GM10248 (cell line): ENCODE measurements at regions of chr3 and their contacts with region 1.

Region 1: GRCh38 chr3:137946345-137946973 is 63.5 kb upstream of the CLDN18 start:
- DNase-seq: peak; percentile 53
- CTCF ChIP-seq: peak; percentile 62

Region 2: GRCh38 chr3:137105277-137105977 is 841.0 kb before region 1 on chr3:
- CTCF ChIA-PET with region 1: interaction called, 34 read pairs
- POLR2A ChIA-PET with region 1: no interaction called
- DNase-seq: peak; percentile 47
- CTCF ChIP-seq: peak; percentile 71

Region 3: GRCh38 chr3:137110484-137110883 is 836.0 kb before region 1 on chr3:
- CTCF ChIA-PET with region 1: interaction called, 34 read pairs
- POLR2A ChIA-PET with region 1: no interaction called
- DNase-seq: peak; percentile 46
- CTCF ChIP-seq: peak; percentile 49

Region 4: GRCh38 chr3:137962251-137962650 is 15.8 kb after region 1 on chr3:
- CTCF ChIA-PET with region 1: interaction called, 13 read pairs
- POLR2A ChIA-PET with region 1: no interaction called
- DNase-seq: no peak
- CTCF ChIP-seq: no peak

Region 5: DNA sequence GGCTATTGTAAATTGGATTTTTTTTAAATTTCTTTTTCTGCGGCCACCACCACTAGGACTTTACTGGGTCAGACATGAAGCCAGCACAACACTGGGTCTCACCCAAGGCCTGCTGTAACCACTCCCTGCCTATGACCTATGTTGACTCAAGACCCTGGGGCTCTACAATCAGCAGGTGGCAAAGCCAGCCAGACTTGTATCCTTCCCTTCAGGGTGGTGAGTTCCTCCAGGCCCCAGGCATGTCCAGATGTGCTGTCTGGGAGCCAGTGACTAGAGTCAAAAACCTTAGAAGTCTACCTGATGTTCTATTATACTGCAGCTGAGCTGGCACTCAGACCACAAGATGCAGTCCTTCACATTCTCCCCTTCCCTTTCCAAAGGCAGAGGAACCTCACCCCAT is 31.9 kb after region 1 on chr3:
- CTCF ChIA-PET with region 1: no interaction called
- POLR2A ChIA-PET with region 1: no interaction called
- DNase-seq: no peak
- CTCF ChIP-seq: no peak